GM18951 (cell line): ENCODE measurements at regions of chr10 and their contacts with region 1.

Region 1: GRCh38 chr10:109517748-109518147 is 405.6 kb downstream of the XPNPEP1 start:
- POLR2A ChIP-seq: no peak

Region 2: GRCh38 chr10:108544494-108545120 is 973.1 kb before region 1 on chr10:
- in situ Hi-C with region 1: loop called (anchors 10 kb)
- POLR2A ChIP-seq: no peak